ENCODE measurements at regions of chr2 and their contacts with region 1.

Region 1: DNA sequence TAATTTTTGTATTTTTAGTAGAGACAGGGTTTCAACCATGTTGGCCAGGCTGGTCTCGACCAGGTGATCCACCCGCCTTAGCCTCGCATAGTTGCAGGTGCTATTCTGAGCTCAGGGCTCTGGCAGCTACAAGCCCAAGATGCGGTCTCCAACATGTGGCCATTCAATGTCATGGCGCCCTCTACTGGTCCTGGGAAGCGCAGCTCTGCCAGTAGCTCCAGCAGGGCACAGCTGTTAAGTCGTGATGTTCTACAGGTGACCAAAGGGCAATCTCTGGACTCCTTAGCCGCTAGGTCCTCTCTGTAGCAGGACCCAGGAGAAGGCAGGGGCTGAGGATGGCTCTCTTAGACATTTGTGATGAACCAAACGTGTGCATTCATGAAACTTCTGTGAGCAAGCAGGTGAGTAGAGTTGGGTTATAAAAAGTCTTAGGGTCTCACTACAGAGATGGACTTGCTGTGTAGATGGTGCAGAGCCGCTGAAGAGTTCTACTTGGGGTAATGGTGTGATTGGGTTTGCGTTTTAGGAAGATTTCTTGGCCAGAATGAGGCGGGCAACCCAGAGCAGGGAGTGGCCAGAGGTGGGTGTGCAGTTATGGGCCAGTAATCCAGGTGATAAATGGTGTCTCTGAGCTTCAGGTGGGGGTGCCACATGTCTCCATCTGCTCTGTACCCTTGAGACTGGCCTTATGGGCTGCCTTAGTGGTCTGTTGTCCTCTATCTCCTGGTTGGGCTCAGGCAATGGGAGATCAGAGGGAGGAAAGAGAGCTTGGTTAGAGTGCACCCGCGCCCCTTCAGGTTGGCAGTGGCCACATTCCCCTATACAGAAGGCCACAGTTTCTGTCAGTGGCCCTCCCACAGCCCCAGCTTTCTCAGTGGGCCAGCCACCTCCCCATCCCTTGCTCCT is 31.0 kb downstream of the IL37 start:
- DNase-seq: peak; percentile 59
- ATAC-seq: no peak
- H3K4me3 ChIP-seq: no peak overlapping the region
- H3K4me3 Mint-ChIP-seq: no peak overlapping the region
- H3K27ac ChIP-seq: no peak overlapping the region
- H3K27ac Mint-ChIP-seq: no peak overlapping the region
- H3K4me1 ChIP-seq: no peaks in the 10 kb centered on the region
- H3K4me1 Mint-ChIP-seq: no peaks in the 10 kb centered on the region
- H3K27me3 ChIP-seq: peaks cover 0 to 5% (median 2%) of the 10 kb centered on the region in 4 experiments
- H3K27me3 Mint-ChIP-seq: peaks cover 4% of the 10 kb centered on the region
- CTCF ChIP-seq: peak; percentile 46

Region 2: DNA sequence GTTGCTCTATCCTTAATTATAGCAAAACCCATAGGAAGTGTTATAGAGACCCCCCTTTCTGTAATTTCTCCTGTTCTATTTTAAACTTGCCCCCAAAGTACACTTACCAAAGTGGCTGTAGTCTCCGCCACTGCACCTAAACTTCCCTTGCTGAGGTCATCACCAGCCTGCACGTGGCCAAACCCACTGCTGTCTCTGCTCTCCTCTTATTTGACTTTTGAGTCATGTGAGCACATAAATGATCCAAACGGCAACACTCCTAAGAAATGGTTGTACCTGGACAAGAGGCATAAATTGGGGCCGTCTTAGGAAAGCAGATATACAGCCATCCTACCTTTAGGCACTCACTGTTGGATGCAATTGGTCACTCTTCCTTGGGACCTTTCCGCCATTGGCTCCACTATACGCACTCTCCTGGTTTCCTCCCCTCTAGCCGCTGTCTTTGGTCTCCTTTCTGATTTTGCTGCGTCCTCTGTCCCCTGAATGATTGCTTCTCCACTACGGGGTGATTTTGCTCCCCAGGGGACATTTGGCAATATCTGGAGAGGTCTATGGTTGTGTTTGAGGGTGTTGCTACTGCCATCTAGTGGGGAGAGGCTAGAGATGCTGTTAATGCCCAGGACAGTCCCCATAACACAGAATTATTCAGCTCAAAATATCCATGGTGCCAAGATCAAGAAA is 16.6 kb after region 1 on chr2:
- CTCF ChIA-PET with region 1: interaction called, 11 read pairs
- POLR2A ChIA-PET with region 1: no interaction called
- intact Hi-C with region 1: no loop called
- DNase-seq: peak; percentile 61
- ATAC-seq: peak; percentile 67
- H3K4me3 ChIP-seq: no peak overlapping the region
- H3K4me3 Mint-ChIP-seq: no peak overlapping the region
- H3K27ac ChIP-seq: no peak overlapping the region
- H3K27ac Mint-ChIP-seq: no peak overlapping the region
- H3K4me1 ChIP-seq: no peaks in the 10 kb centered on the region
- H3K4me1 Mint-ChIP-seq: no peaks in the 10 kb centered on the region
- H3K27me3 ChIP-seq: peaks cover 0 to 15% (median 0%) of the 10 kb centered on the region in 4 experiments
- H3K27me3 Mint-ChIP-seq: peaks cover 4% of the 10 kb centered on the region
- CTCF ChIP-seq: peak; percentile 88

Measured in B cell (primary cell).